A673 (cell line): ENCODE measurements at regions of chr6 and their contacts with region 1.

Region 1: GRCh38 chr6:125415921-125416320 is 114.2 kb upstream of the HDDC2 start:
- DNase-seq: no peak
- H3K4me3 ChIP-seq: no peak overlapping the region
- H3K27ac ChIP-seq: no peak overlapping the region
- H3K4me1 ChIP-seq: no peaks in the 10 kb centered on the region
- H3K27me3 ChIP-seq: peaks cover 3% of the 10 kb centered on the region
- CTCF ChIP-seq: no peak

Region 2: GRCh38 chr6:125700581-125701353 is 284.8 kb after region 1 on chr6:
- CTCF ChIA-PET with region 1: no interaction called
- POLR2A ChIA-PET with region 1: interaction called, 12 read pairs
- intact Hi-C with region 1: no loop called
- DNase-seq: no peak
- H3K4me3 ChIP-seq: no peak overlapping the region
- H3K27ac ChIP-seq: no peak overlapping the region
- H3K4me1 ChIP-seq: no peaks in the 10 kb centered on the region
- H3K27me3 ChIP-seq: no peaks in the 10 kb centered on the region
- CTCF ChIP-seq: no peak

Region 3: GRCh38 chr6:125711013-125711675 is 295.2 kb after region 1 on chr6:
- CTCF ChIA-PET with region 1: no interaction called
- POLR2A ChIA-PET with region 1: no interaction called
- intact Hi-C with region 1: no loop called
- DNase-seq: no peak
- H3K4me3 ChIP-seq: no peak overlapping the region
- H3K27ac ChIP-seq: no peak overlapping the region
- H3K4me1 ChIP-seq: no peaks in the 10 kb centered on the region
- H3K27me3 ChIP-seq: no peaks in the 10 kb centered on the region
- CTCF ChIP-seq: no peak

Region 4: DNA sequence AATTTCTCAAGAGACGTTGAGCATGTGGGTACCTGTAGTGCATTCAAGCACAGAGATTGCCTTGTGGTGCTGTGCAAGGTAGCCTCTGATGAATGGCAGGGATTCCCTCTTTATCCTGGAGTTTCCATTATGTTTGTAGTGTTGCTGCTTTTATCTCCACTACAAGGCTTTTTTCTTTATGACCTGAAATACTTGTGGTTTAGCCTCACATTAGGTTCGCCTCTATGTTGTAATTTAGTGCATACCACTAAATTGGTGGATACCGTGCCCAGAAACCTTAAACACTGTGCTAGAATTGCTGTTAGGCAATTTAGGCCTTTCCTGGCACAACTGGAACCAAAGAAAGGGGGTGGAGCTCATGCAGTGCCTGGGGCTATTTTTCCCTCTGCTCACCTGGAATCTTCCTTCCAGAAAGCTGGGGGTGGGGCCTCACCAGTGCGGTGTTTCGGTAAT is 451.6 kb after region 1 on chr6:
- CTCF ChIA-PET with region 1: no interaction called
- POLR2A ChIA-PET with region 1: no interaction called
- intact Hi-C with region 1: no loop called
- DNase-seq: peak; percentile 6
- H3K4me3 ChIP-seq: no peak overlapping the region
- H3K27ac ChIP-seq: no peak overlapping the region
- H3K4me1 ChIP-seq: no peaks in the 10 kb centered on the region
- H3K27me3 ChIP-seq: no peaks in the 10 kb centered on the region
- CTCF ChIP-seq: no peak

Region 5: GRCh38 chr6:126285871-126286365 is 870.0 kb after region 1 on chr6:
- CTCF ChIA-PET with region 1: no interaction called
- POLR2A ChIA-PET with region 1: no interaction called
- intact Hi-C with region 1: no loop called
- DNase-seq: no peak
- H3K4me3 ChIP-seq: no peak overlapping the region
- H3K27ac ChIP-seq: no peak overlapping the region
- H3K4me1 ChIP-seq: no peaks in the 10 kb centered on the region
- H3K27me3 ChIP-seq: no peaks in the 10 kb centered on the region
- CTCF ChIP-seq: no peak